ENCODE measurements at regions of chrX and their contacts with region 1.

Region 1: DNA sequence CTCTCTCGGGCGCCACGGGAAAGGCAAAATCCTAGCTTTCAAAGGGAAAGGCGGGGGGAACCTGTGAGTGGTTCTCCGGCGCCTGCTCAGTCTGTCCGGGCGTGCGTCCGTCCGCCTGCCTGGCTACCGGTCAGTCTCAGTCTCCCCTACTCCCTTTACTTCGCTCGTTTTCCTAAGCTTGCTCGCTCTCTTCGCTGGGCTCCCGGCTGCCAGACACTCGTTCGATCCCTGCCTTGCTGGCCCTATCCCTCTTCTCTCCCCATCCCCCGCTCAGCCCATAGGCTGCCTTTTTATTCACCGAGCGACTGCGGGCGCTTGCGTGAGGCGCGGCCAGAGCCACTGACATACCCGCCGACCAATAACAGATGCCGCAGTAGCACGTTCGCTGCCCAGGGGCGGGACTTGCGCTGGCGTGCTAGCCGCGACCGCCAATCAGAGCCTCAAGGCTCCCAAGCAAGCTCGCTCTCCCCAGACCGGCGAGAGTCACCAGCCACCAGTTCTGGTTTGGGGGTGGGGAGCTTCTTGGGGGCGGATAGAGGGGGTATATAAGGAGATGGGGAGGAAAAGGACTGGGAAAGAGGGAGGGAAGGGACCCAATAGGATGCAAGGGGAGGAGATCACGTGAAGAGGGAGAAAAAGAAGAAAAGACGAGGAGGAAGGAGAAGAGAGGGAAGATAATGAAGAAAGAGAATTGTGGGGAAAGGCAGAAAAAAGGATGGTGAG is 30.0 kb downstream of the ARHGEF9 start:
- DNase-seq: peak; percentile 85
- H3K4me3 Mint-ChIP-seq: peak overlapping the region; percentile 95
- H3K27ac Mint-ChIP-seq: peak overlapping the region; percentile 98
- H3K4me1 Mint-ChIP-seq: peaks cover 42% of the 10 kb centered on the region
- H3K27me3 Mint-ChIP-seq: no peaks in the 10 kb centered on the region

Region 2: GRCh38 chrX:63350941-63351616 is 403.9 kb before region 1 on chrX and contains the start of gene SPIN4:
- intact Hi-C with region 1: loop called (anchors 1 kb)
- DNase-seq: peak; percentile 66
- H3K4me3 Mint-ChIP-seq: peak within 1 kb of the TSS; percentile 92
- H3K27ac Mint-ChIP-seq: peak within 1 kb of the TSS; percentile 85
- H3K4me1 Mint-ChIP-seq: peaks cover 30% of the 10 kb centered on the region
- H3K27me3 Mint-ChIP-seq: no peaks in the 10 kb centered on the region
- total RNA-seq, gene SPIN4: 7.5 and 8.2 TPM in 2 replicates

Region 3: GRCh38 chrX:63560601-63561218 is 194.3 kb before region 1 on chrX:
- intact Hi-C with region 1: loop called (anchors 5 kb)
- DNase-seq: peak; percentile 45
- H3K4me3 Mint-ChIP-seq: peak overlapping the region; percentile 98
- H3K27ac Mint-ChIP-seq: peak overlapping the region; percentile 84
- H3K4me1 Mint-ChIP-seq: peaks cover 7% of the 10 kb centered on the region
- H3K27me3 Mint-ChIP-seq: no peaks in the 10 kb centered on the region

Region 4: GRCh38 chrX:64975989-64976672 is 1221.1 kb after region 1 on chrX and contains the start of gene ZC4H2:
- intact Hi-C with region 1: loop called (anchors 10 kb)
- DNase-seq: peak; percentile 54
- H3K4me3 Mint-ChIP-seq: peak within 1 kb of the TSS; percentile 93
- H3K27ac Mint-ChIP-seq: peak within 1 kb of the TSS; percentile 61
- H3K4me1 Mint-ChIP-seq: peaks cover 20% of the 10 kb centered on the region
- H3K27me3 Mint-ChIP-seq: no peaks in the 10 kb centered on the region
- total RNA-seq, gene ZC4H2: 8.9 and 9.3 TPM in 2 replicates